A549 (cell line): ENCODE measurements at regions of chr9 and their contacts with region 1.

Region 1: DNA sequence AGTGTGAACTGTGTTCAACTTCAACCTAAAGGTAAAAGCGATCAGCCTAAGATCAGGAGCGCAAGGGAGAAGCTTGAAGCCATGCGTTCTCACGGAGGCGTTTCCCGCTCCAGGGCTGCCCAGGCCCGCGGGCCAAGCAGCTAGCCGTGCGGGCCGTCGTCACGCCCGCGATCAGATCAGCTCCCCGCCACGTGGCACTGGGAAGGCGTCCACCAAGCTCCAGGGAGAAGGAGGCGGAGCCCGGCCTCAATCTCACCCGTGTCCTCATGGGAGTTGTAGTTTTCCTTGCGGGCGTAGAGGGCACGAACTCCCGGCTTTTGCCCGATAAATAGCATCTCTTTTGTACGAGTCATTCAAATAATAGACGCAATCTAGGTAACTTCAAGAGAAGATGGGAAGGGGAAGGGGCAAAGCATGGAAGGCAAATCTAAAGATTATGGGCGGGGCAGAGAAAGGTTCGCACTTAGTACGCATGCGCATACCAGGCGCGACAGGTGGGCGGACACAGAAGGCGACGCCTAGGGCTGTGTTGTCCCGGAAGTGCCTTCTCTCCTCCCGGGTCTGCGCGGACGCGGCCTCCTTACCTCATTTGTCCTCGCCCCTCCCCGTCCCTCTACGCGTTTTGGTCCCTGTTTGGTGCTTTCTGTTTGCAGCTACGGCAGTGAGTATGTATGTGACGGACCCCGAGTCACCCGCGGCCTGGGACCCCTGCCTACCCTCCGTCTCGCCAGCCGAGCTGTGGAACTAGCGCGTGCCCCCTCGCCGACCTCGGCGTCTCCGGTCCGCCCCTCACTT is 40.8 kb upstream of the ZCCHC7 start:
- DNase-seq: peak; percentile 89 to 96
- ATAC-seq: peak; percentile 97 to 98
- H3K4me3 ChIP-seq: peak overlapping the region; percentile 79
- H3K27ac ChIP-seq: peak overlapping the region; percentile 83 to 96
- H3K4me1 ChIP-seq: peaks cover 6% of the 10 kb centered on the region; the same call in 2 of the 3 replicates
- CTCF ChIP-seq: no peak
- EP300 ChIP-seq: no peak
- POLR2A ChIP-seq: peak; percentile 69
- RAD21 ChIP-seq: no peak

Region 2: DNA sequence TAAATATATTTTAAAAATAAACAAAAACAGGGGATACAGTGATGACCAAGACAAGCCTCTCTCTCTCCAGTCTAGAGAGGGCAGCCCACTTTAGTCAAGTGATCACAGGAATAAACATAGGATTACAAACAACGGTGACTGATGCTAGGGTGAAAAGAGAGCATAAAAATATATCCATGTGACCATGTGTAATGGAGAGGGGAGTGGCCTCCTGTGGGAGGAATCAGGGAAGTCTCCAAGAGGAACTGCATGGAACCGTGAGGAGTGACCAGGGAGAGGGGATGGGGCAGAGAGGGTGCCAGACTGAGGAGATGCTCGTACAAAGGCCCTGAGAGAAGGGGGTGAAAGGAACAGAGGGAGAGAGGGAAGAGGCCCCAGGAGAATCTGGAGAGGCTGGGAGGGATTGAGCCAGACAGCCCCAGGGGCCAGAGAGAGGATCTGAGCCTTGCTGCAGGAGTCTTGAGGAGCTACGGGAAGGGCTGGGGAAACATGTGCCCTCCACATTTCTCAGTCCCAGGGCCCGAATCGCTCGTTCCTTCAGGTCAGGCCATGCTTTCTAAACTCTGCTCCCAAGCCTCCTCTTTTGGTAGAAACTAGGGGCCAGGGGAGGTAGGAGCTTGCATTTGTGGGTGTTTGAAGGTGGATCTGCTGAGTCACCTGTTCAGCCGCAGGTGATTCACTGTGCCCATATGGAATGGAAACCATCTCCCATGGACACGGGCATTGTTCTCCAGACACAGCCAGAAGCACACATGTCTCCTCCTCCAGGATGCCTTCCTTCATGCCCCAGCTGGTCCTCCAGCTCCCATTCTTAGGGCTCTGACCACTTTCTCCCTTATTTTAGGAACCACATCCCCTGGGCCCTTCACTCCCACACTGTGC is 109.3 kb before region 1 on chr9:
- CTCF ChIA-PET with region 1: no interaction called
- POLR2A ChIA-PET with region 1: no interaction called
- DNase-seq: peak in 1 of 2 experiments; percentile 22
- ATAC-seq: peak; percentile 62 to 78; a peak in 5 of 6 replicates
- H3K4me3 ChIP-seq: no peak overlapping the region
- H3K27ac ChIP-seq: no peak overlapping the region; a peak in 1 of 6 replicates
- H3K4me1 ChIP-seq: peaks cover 8% of the 10 kb centered on the region; the same call in 2 of the 3 replicates
- CTCF ChIP-seq: no peak
- EP300 ChIP-seq: no peak
- POLR2A ChIP-seq: no peak
- RAD21 ChIP-seq: no peak

Region 3: DNA sequence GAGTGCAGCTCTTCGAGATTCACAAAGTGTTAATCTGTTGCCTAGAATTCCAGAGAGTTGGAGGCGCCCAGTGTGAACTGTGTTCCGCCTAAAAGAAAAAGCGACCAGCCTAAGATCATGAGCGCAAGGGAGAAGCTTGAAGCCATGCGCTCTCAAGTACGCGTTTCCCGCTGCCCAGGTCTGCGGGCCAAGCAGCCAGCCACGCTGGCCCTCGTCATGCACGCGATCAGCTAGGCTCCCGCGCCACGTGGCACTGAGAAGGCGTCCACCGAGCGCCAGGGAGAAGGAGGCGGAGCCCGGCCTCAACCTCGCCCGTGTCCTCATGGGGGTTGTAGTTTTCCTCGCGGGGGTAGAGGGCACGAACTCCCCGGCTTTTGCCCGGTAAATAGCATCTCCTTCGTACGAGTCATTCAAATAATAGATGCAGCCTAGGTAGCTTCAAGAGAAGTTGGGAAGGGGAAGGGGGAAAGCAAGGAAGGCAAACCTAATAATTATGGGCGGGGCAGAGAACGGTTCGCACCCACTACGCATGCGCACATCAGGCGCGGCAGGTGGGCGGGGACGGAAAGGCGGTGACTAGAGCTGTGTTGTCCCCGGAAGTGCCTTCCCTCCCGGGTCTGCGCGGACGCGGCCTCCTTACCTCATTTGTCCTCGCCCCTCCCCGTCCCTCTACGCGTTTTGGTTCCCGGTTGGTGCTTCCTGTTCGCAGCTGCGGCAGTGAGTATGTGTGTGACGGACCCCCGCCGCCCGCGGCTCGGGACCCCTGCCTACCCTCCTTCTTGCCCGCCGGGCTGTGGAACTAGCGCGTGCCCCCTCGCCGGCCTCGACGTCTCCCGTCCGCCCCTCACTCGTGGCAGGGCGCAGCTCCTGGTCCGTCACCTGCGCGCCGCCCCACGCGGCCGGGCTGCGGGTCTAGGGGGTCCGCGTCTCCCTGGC is 40.6 kb after region 1 on chr9 and contains the start of gene ZCCHC7:
- CTCF ChIA-PET with region 1: interaction called, 3 read pairs
- POLR2A ChIA-PET with region 1: interaction called, 20 read pairs
- DNase-seq: peak; percentile 96 to 97
- ATAC-seq: peak; percentile 97 to 99
- H3K4me3 ChIP-seq: peak within 1 kb of the TSS; percentile 98
- H3K27ac ChIP-seq: peak within 1 kb of the TSS; percentile 92 to 96
- H3K4me1 ChIP-seq: peaks cover 9% of the 10 kb centered on the region
- CTCF ChIP-seq: no peak
- EP300 ChIP-seq: no peak
- POLR2A ChIP-seq: peak; percentile 79
- RAD21 ChIP-seq: no peak; a peak in 1 of 5 replicates
- polyA plus RNA-seq, gene ZCCHC7: 30.0 and 34.6 TPM in 2 replicates